Activated B cell treated with CpG ODN at 0.5 μM for 24 hours (primary cell): ENCODE measurements at regions of chr3 and their contacts with region 1.

Region 1: DNA sequence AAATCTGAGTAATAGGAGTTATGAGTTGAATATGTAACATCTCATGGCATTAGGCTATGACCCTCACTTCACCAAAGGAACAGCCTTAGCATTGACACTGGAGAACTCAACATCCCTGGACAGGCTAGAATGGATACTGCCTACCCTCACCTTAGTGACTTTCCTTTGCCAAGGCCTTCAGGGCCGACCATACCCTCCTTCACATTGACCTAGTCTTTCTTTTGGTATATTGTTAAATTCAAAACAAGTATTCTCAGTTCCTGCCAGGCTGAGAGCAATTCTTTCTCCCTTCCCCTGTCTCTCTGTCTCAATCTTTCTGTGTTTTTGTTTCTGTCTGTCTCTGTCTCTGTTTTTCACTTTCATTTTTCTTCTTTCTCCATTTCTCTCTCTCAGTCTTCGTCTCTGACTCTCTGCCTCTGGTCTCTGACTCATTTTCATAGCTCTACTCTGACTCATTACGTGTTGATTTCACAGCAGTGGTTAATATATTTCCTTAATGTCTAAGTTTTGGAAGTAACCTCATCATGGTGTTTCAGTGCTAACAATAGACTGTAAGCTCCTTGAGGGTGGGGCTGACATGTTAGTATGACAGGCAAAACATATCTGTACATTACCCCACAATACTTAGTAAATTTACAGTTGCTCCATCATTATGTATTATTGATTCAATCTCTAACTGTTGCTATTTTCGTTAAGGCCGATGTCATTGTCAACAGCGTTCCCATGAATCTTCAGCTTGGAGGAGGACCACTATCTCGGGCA is 32.5 kb downstream of the PARP15 start:
- DNase-seq: no peak
- ATAC-seq: peak; percentile 88
- H3K4me3 Mint-ChIP-seq: peak overlapping the region; percentile 37
- H3K27ac Mint-ChIP-seq: peak overlapping the region; percentile 80
- H3K4me1 Mint-ChIP-seq: peaks cover 41% of the 10 kb centered on the region
- H3K27me3 Mint-ChIP-seq: no peaks in the 10 kb centered on the region
- CTCF ChIP-seq: no peak

Region 2: GRCh38 chr3:122578069-122578740 is 31.8 kb before region 1 on chr3:
- CTCF ChIA-PET with region 1: interaction called, 3 read pairs
- POLR2A ChIA-PET with region 1: interaction called, 27 read pairs
- intact Hi-C with region 1: loop called (anchors 1 kb)
- DNase-seq: no peak
- ATAC-seq: no peak
- H3K4me3 Mint-ChIP-seq: peak overlapping the region; percentile 100
- H3K27ac Mint-ChIP-seq: peak overlapping the region; percentile 100
- H3K4me1 Mint-ChIP-seq: peaks cover 82% of the 10 kb centered on the region
- H3K27me3 Mint-ChIP-seq: no peaks in the 10 kb centered on the region
- CTCF ChIP-seq: no peak

Region 3: GRCh38 chr3:122589297-122589696 is 20.7 kb before region 1 on chr3:
- CTCF ChIA-PET with region 1: no interaction called
- POLR2A ChIA-PET with region 1: interaction called, 4 read pairs
- intact Hi-C with region 1: loop called (anchors 1 kb)
- DNase-seq: no peak
- ATAC-seq: peak; percentile 56
- H3K4me3 Mint-ChIP-seq: peak overlapping the region; percentile 28
- H3K27ac Mint-ChIP-seq: peak overlapping the region; percentile 81
- H3K4me1 Mint-ChIP-seq: peaks cover 80% of the 10 kb centered on the region
- H3K27me3 Mint-ChIP-seq: no peaks in the 10 kb centered on the region
- CTCF ChIP-seq: no peak

Region 4: DNA sequence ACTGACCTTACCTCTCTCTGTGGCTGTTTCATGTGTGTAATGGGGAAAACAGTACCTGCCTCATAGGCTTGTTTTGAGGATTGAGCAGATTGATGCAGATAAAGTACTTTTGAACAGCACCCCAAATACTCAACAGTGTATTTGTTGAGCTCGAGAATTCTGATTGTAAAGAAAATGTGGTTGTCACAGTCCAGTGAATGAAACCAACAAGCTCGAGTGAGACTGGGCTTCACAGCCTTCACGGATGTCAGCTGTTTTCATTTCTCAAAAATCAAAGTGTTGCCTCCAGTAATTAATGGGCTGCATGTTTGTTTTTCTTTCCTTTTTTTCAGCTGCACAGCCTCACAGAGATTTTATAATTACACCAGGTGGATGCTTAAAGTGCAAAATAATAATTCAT is 11.1 kb after region 1 on chr3:
- CTCF ChIA-PET with region 1: no interaction called
- POLR2A ChIA-PET with region 1: interaction called, 16 read pairs
- intact Hi-C with region 1: loop called (anchors 1 kb)
- DNase-seq: no peak
- ATAC-seq: peak; percentile 38
- H3K4me3 Mint-ChIP-seq: peak overlapping the region; percentile 56
- H3K27ac Mint-ChIP-seq: peak overlapping the region; percentile 85
- H3K4me1 Mint-ChIP-seq: peaks cover 73% of the 10 kb centered on the region
- H3K27me3 Mint-ChIP-seq: no peaks in the 10 kb centered on the region
- CTCF ChIP-seq: no peak